Testis (tissue), 5 donors: ENCODE measurements at regions of chr7 and their contacts with region 1.

Region 1: GRCh38 chr7:90424720-90425119 is 21.5 kb downstream of the CLDN12 start:
- DNase-seq: no peak
- H3K4me3 ChIP-seq: no peak overlapping the region
- H3K27ac ChIP-seq: no peak overlapping the region
- H3K4me1 ChIP-seq: no peaks in the 10 kb centered on the region
- H3K27me3 ChIP-seq: no peaks in the 10 kb centered on the region
- CTCF ChIP-seq: no peak
- POLR2A ChIP-seq: no peak

Region 2: DNA sequence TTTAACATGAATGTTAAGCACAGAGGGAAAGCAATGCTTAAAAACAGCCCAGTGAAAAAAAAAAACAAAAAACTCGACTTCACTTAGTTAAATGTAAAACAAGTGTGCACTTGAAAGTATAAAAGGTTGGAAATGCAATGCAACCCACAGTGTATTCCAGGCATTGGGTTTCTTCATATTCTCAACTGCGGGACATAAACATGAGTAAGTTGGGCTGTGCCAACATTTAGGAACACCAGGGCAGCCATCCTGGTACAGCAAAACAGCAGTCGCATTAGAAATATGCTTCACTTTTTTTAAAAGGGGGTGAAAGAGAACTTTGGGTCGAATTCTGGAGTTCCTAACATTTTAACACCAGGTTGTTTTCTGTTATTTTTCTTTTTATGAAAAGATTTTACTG is 269.5 kb before region 1 on chr7:
- intact Hi-C with region 1: loop called (anchors 10 kb)
- DNase-seq: no peak
- H3K4me3 ChIP-seq: no peak overlapping the region
- H3K27ac ChIP-seq: no peak overlapping the region
- H3K4me1 ChIP-seq: no peaks in the 10 kb centered on the region
- H3K27me3 ChIP-seq: no peaks in the 10 kb centered on the region
- CTCF ChIP-seq: no peak
- POLR2A ChIP-seq: no peak